ENCODE measurements at regions of chr16 and their contacts with region 1.

Region 1: GRCh38 chr16:30698139-30698815 is 694 bp upstream of the SRCAP start:
- DNase-seq: peak; percentile 96 to 99 (median 99)
- ATAC-seq: peak; percentile 74
- H3K4me3 ChIP-seq: peak overlapping the region; percentile 84 to 99
- H3K4me3 Mint-ChIP-seq: peak overlapping the region; percentile 97
- H3K27ac ChIP-seq: peak overlapping the region; percentile 98 to 100
- H3K27ac Mint-ChIP-seq: peak overlapping the region; percentile 100
- H3K4me1 ChIP-seq: peaks cover 24% of the 10 kb centered on the region
- H3K4me1 Mint-ChIP-seq: peaks cover 35% of the 10 kb centered on the region
- H3K27me3 ChIP-seq: no peaks in the 10 kb centered on the region
- H3K27me3 Mint-ChIP-seq: no peaks in the 10 kb centered on the region
- CTCF ChIP-seq: no peak

Region 2: GRCh38 chr16:30417529-30418349 is 280.5 kb before region 1 on chr16:
- CTCF ChIA-PET with region 1: no interaction called
- POLR2A ChIA-PET with region 1: interaction called, 5 read pairs
- intact Hi-C with region 1: loop called (anchors 1 kb)
- DNase-seq: peak; percentile 78 to 98 (median 88)
- ATAC-seq: peak; percentile 87
- H3K4me3 ChIP-seq: peak overlapping the region; percentile 52 to 72
- H3K4me3 Mint-ChIP-seq: peak overlapping the region; percentile 74
- H3K27ac ChIP-seq: peak overlapping the region; percentile 81 to 91
- H3K27ac Mint-ChIP-seq: peak overlapping the region; percentile 77
- H3K4me1 ChIP-seq: peaks cover 18% of the 10 kb centered on the region
- H3K4me1 Mint-ChIP-seq: peaks cover 7% of the 10 kb centered on the region
- H3K27me3 ChIP-seq: no peaks in the 10 kb centered on the region
- H3K27me3 Mint-ChIP-seq: no peaks in the 10 kb centered on the region
- CTCF ChIP-seq: no peak

Region 3: GRCh38 chr16:30557957-30558788 is 140.1 kb before region 1 on chr16 and contains the start of gene ZNF764:
- CTCF ChIA-PET with region 1: interaction called, 4 read pairs
- POLR2A ChIA-PET with region 1: no interaction called
- intact Hi-C with region 1: loop called (anchors 1 kb)
- DNase-seq: peak; percentile 88 to 98 (median 96)
- ATAC-seq: peak; percentile 90
- H3K4me3 ChIP-seq: peak within 1 kb of the TSS; percentile 68 to 84
- H3K4me3 Mint-ChIP-seq: peak within 1 kb of the TSS; percentile 84
- H3K27ac ChIP-seq: peak within 1 kb of the TSS; percentile 80 to 88
- H3K27ac Mint-ChIP-seq: peak within 1 kb of the TSS; percentile 93
- H3K4me1 ChIP-seq: peaks cover 28% of the 10 kb centered on the region
- H3K4me1 Mint-ChIP-seq: peaks cover 35% of the 10 kb centered on the region
- H3K27me3 ChIP-seq: no peaks in the 10 kb centered on the region
- H3K27me3 Mint-ChIP-seq: no peaks in the 10 kb centered on the region
- CTCF ChIP-seq: no peak
- total RNA-seq, gene ZNF764: 15.0 to 15.6 TPM

Region 4: GRCh38 chr16:30628627-30629540 is 69.4 kb before region 1 on chr16:
- CTCF ChIA-PET with region 1: interaction called, 7 read pairs
- POLR2A ChIA-PET with region 1: interaction called, 5 read pairs
- intact Hi-C with region 1: loop called (anchors 1 kb)
- DNase-seq: peak; percentile 77 to 92 (median 84)
- ATAC-seq: peak; percentile 96
- H3K4me3 ChIP-seq: peak overlapping the region in 1 of 2 experiments; percentile 10
- H3K4me3 Mint-ChIP-seq: peak overlapping the region; percentile 79
- H3K27ac ChIP-seq: peak overlapping the region in 1 of 2 experiments; percentile 19
- H3K27ac Mint-ChIP-seq: no peak overlapping the region
- H3K4me1 ChIP-seq: peaks cover 9% of the 10 kb centered on the region
- H3K4me1 Mint-ChIP-seq: peaks cover 5% of the 10 kb centered on the region
- H3K27me3 ChIP-seq: no peaks in the 10 kb centered on the region
- H3K27me3 Mint-ChIP-seq: no peaks in the 10 kb centered on the region
- CTCF ChIP-seq: peak; percentile 85

Region 5: GRCh38 chr16:30736996-30737793 is 38.9 kb after region 1 on chr16:
- CTCF ChIA-PET with region 1: no interaction called
- POLR2A ChIA-PET with region 1: no interaction called
- intact Hi-C with region 1: no loop called
- DNase-seq: no peak
- ATAC-seq: no peak
- H3K4me3 ChIP-seq: no peak overlapping the region
- H3K4me3 Mint-ChIP-seq: no peak overlapping the region
- H3K27ac ChIP-seq: no peak overlapping the region
- H3K27ac Mint-ChIP-seq: peak overlapping the region; percentile 4
- H3K4me1 ChIP-seq: no peaks in the 10 kb centered on the region
- H3K4me1 Mint-ChIP-seq: peaks cover 5% of the 10 kb centered on the region
- H3K27me3 ChIP-seq: no peaks in the 10 kb centered on the region
- H3K27me3 Mint-ChIP-seq: no peaks in the 10 kb centered on the region
- CTCF ChIP-seq: no peak

Region 6: DNA sequence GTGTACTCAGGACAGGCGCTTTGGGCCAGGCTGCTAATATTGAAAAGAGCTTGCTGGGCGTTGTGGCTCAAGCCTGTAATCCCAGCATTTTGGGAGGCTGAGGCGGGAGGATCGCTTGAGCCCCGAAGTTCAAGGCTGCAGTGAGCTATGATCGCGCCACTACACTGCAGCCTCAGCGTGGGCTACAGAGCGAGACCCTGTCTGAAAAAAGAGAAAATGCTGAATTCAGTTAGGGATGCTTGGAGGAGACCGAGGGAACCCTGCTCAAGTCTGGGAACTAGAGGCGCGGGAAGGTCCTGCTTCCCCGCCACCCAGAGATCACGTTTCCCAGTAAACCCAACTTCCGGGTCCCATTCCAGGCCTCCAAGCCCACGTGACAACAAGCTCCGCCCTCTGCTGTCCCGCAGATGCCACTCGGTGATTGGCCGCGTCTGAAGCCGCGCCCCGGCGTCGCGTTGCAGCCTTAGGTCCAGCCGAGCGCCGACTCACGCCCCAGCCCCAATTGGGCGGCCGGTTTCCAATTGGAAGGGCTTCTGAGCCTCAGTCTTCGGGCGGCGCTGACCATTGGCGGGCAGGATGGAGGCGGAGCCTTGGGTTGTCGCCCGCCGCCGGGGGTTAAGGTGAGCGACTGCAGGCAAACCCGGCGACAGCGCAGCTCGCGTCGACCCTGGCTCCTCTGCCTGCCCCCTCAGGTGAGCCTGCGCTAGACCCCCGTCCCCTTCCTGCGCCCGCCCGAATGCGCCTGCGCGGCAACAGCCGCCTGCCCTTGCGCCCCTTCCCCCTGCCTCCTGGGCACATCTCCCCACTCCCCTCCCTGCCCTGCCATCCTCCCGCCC is 49.7 kb after region 1 on chr16 and contains the start of gene PHKG2:
- CTCF ChIA-PET with region 1: no interaction called
- POLR2A ChIA-PET with region 1: interaction called, 3 read pairs
- intact Hi-C with region 1: loop called (anchors 1 kb)
- DNase-seq: peak; percentile 88 to 99 (median 96)
- ATAC-seq: peak; percentile 93
- H3K4me3 ChIP-seq: peak within 1 kb of the TSS; percentile 59 to 68
- H3K4me3 Mint-ChIP-seq: peak within 1 kb of the TSS; percentile 89
- H3K27ac ChIP-seq: peak within 1 kb of the TSS; percentile 50 to 83
- H3K27ac Mint-ChIP-seq: peak within 1 kb of the TSS; percentile 66
- H3K4me1 ChIP-seq: peaks cover 12% of the 10 kb centered on the region
- H3K4me1 Mint-ChIP-seq: peaks cover 22% of the 10 kb centered on the region
- H3K27me3 ChIP-seq: no peaks in the 10 kb centered on the region
- H3K27me3 Mint-ChIP-seq: no peaks in the 10 kb centered on the region
- CTCF ChIP-seq: no peak
- total RNA-seq, gene PHKG2: 26.4 to 36.3 TPM

Region 7: DNA sequence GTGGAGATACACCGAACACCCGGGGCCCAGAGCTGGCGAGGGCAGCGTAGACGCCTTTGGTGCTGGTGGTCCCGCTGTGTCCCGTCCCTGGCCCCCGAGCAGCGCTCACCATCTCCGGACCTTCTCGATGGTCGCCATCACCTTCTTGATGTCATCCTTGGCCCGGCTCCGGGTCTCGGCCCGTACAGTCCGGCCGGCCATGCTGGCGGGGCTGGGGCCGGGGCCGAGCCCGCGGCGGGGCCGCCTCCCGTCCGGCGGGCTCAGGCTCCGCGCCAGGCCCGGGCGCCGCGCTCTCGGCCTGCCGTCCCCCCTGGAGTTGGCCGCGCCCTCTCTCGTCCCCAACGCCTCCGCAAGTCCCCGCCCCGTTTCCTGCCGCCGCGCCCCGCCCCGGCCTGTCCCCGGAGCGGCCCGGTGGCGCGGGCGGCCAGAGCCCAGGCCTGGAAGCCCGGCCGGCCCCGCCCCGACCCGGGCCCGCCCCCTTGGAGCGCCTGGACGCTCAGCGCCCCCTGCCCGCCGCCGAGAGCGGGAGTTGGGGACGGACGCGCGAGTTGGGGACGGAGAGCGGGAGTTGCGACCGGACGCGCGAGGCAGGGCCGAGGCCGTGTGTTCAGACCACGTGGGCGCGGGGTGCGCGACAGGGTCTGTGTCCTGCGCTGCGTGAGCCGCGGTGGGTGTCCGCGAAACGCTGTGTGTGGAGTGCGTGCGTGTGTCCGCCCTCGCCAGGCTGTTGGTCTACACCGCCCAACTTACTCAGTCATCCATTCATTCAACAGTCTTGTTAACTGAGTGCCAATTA is 195.7 kb after region 1 on chr16 and contains the start of gene BCL7C:
- CTCF ChIA-PET with region 1: no interaction called
- POLR2A ChIA-PET with region 1: no interaction called
- intact Hi-C with region 1: loop called in 1 of 2 experiments (anchors 2 kb)
- DNase-seq: peak; percentile 33 to 88 (median 78)
- ATAC-seq: peak; percentile 73
- H3K4me3 ChIP-seq: peak within 1 kb of the TSS; percentile 72 to 85
- H3K4me3 Mint-ChIP-seq: peak within 1 kb of the TSS; percentile 88
- H3K27ac ChIP-seq: peak within 1 kb of the TSS; percentile 45 to 83
- H3K27ac Mint-ChIP-seq: peak within 1 kb of the TSS; percentile 92
- H3K4me1 ChIP-seq: peaks cover 33% of the 10 kb centered on the region
- H3K4me1 Mint-ChIP-seq: peaks cover 43% of the 10 kb centered on the region
- H3K27me3 ChIP-seq: no peaks in the 10 kb centered on the region
- H3K27me3 Mint-ChIP-seq: no peaks in the 10 kb centered on the region
- CTCF ChIP-seq: no peak
- total RNA-seq, gene BCL7C: 16.0 to 16.2 TPM

Region 8: GRCh38 chr16:31215287-31216162 is 517.2 kb after region 1 on chr16:
- CTCF ChIA-PET with region 1: no interaction called
- POLR2A ChIA-PET with region 1: no interaction called
- intact Hi-C with region 1: no loop called
- DNase-seq: peak in 4 of 9 experiments; percentile 29 to 55 (median 46)
- ATAC-seq: peak; percentile 70
- H3K4me3 ChIP-seq: peak overlapping the region; percentile 24 to 34
- H3K4me3 Mint-ChIP-seq: peak overlapping the region; percentile 80
- H3K27ac ChIP-seq: no peak overlapping the region
- H3K27ac Mint-ChIP-seq: no peak overlapping the region
- H3K4me1 ChIP-seq: peaks cover 27% of the 10 kb centered on the region
- H3K4me1 Mint-ChIP-seq: peaks cover 13% of the 10 kb centered on the region
- H3K27me3 ChIP-seq: peaks cover 24 to 33% of the 10 kb centered on the region in 2 experiments
- H3K27me3 Mint-ChIP-seq: peaks cover 28% of the 10 kb centered on the region
- CTCF ChIP-seq: no peak

Region 9: GRCh38 chr16:31371619-31372484 is 673.6 kb after region 1 on chr16:
- CTCF ChIA-PET with region 1: no interaction called
- POLR2A ChIA-PET with region 1: no interaction called
- intact Hi-C with region 1: no loop called
- DNase-seq: no peak
- ATAC-seq: no peak
- H3K4me3 ChIP-seq: no peak overlapping the region
- H3K4me3 Mint-ChIP-seq: no peak overlapping the region
- H3K27ac ChIP-seq: no peak overlapping the region
- H3K27ac Mint-ChIP-seq: no peak overlapping the region
- H3K4me1 ChIP-seq: no peaks in the 10 kb centered on the region
- H3K4me1 Mint-ChIP-seq: peaks cover 8% of the 10 kb centered on the region
- H3K27me3 ChIP-seq: no peaks in the 10 kb centered on the region
- H3K27me3 Mint-ChIP-seq: no peaks in the 10 kb centered on the region
- CTCF ChIP-seq: no peak

Region 10: DNA sequence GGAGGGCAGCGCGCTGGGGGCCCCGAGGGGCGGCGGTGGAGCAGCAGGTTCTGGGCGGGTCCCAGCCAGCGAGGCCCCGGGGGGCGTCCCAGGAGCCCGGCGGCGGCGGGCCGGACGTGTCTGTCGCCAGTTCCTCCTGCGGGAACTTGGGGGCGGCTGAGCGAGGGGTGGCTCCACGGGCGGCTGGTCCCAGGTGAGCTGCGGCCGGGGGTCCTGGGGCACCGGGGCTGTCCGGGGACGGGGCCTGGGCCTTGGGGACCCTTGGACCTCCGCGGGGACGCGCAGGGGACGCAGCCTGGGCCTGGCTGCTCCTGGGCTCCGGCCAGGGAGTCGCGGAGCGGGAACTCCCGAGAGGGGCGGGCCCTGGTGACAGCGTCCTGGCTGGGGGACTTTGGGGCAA is 1121.1 kb after region 1 on chr16:
- CTCF ChIA-PET with region 1: no interaction called
- POLR2A ChIA-PET with region 1: no interaction called
- intact Hi-C with region 1: no loop called
- DNase-seq: peak in 1 of 9 experiments; percentile 2
- ATAC-seq: no peak
- H3K4me3 ChIP-seq: no peak overlapping the region
- H3K4me3 Mint-ChIP-seq: no peak overlapping the region
- H3K27ac ChIP-seq: no peak overlapping the region
- H3K27ac Mint-ChIP-seq: no peak overlapping the region
- H3K4me1 ChIP-seq: no peaks in the 10 kb centered on the region
- H3K4me1 Mint-ChIP-seq: no peaks in the 10 kb centered on the region
- H3K27me3 ChIP-seq: peaks cover 0 to 1% of the 10 kb centered on the region in 2 experiments
- H3K27me3 Mint-ChIP-seq: peaks cover 29% of the 10 kb centered on the region
- CTCF ChIP-seq: no peak